Activated CD4-positive, alpha-beta T cell treated with anti-CD3 and anti-CD28 coated beads, Interleukin-2, amount 10 ng/mL, durations not matched to agents 7 days and 5 days (primary cell): ENCODE measurements at regions of chr15 and their contacts with region 1.

Region 1: DNA sequence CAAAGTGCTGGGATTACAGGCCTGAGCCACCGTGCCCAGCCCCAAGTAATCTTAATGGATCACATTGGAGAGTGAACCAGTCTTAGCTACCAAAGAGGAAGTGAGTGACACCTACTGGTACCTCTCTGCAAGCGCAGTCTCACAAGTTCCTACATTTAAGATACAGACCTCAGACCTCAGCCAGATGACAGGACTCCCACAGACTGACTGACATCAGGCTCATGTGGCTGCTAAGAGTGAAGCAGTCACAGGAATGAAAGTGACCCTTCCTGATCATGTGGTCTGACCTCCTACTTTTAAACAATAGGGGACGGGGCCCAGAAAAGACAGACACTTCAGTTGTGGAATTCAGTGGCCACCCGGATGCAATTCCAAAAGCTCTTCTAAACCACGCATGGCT is 36.3 kb upstream of the GNB5 start:
- DNase-seq: peak; percentile 78
- H3K4me3 Mint-ChIP-seq: no peak overlapping the region
- H3K27ac Mint-ChIP-seq: no peak overlapping the region
- H3K4me1 Mint-ChIP-seq: peaks cover 25% of the 10 kb centered on the region
- H3K27me3 Mint-ChIP-seq: no peaks in the 10 kb centered on the region

Region 2: DNA sequence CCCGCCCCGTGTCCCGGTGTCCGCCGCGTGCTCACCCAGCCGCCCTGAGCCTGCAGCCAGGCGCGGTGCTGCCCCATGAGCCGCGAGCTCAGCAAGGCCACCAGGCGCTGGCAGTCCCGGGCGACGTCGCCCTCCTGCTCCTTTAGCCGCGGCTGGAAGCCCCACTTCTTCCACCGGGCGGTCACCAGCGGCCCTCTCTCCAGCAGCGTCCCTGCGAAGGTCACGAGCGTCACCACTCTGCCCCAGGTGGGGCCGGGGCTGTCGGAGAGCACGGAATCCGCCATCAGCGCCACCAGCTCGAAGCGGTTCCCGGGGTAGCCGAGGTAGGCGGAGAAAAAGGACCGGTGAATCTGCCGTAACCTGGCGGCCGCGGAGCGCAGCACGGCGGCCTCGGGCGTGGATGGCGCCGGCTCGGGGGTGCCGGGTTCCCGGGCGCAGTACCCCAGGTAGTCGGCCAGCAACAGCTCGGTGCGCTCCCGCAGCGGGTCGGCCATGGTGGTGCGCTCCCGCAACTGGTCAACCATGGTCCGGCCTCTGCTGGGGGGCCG is 115.2 kb before region 1 on chr15:
- CTCF ChIA-PET with region 1: no interaction called
- POLR2A ChIA-PET with region 1: no interaction called
- DNase-seq: peak; percentile 49
- H3K4me3 Mint-ChIP-seq: peak overlapping the region; percentile 51
- H3K27ac Mint-ChIP-seq: no peak overlapping the region
- H3K4me1 Mint-ChIP-seq: peaks cover 11% of the 10 kb centered on the region
- H3K27me3 Mint-ChIP-seq: peaks cover 44% of the 10 kb centered on the region

Region 3: GRCh38 chr15:52124270-52124880 is 103.1 kb before region 1 on chr15:
- CTCF ChIA-PET with region 1: no interaction called
- POLR2A ChIA-PET with region 1: no interaction called
- DNase-seq: no peak
- H3K4me3 Mint-ChIP-seq: no peak overlapping the region
- H3K27ac Mint-ChIP-seq: no peak overlapping the region
- H3K4me1 Mint-ChIP-seq: no peaks in the 10 kb centered on the region
- H3K27me3 Mint-ChIP-seq: no peaks in the 10 kb centered on the region

Region 4: DNA sequence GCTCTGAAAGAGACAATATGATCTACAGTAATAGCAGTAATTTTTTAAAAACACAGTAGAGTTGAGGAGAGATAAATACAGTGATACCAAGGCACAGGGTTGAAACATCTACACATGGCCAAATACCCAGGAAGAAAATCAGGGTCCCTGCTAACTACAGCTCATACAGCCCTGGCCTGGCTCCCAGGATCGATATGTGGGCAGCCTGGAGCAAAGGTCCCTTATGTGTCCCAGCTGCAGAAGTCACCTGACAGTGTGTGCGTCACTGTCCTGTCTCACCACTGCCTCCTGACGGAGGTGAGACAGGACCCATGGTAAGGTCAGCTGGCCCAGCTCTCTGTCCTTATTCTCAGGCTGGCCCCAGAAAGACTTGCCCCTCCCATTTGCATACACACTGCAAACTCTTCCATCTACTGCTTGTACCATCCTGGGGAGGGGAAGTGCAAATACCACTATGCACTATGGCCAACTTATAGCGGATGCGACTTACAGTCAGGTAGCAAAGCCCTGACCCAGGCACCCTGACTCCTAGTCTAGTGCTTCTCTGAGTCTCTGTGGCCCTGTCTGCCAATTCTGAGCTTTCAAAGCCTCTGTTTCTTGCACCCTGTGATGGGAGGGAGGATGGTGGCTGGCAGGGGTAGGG is 92.8 kb before region 1 on chr15:
- CTCF ChIA-PET with region 1: no interaction called
- POLR2A ChIA-PET with region 1: no interaction called
- DNase-seq: no peak
- H3K4me3 Mint-ChIP-seq: no peak overlapping the region
- H3K27ac Mint-ChIP-seq: peak overlapping the region; percentile 11
- H3K4me1 Mint-ChIP-seq: peaks cover 14% of the 10 kb centered on the region
- H3K27me3 Mint-ChIP-seq: no peaks in the 10 kb centered on the region

Region 5: GRCh38 chr15:52183562-52184173 is 43.8 kb before region 1 on chr15:
- CTCF ChIA-PET with region 1: interaction called, 10 read pairs
- POLR2A ChIA-PET with region 1: no interaction called
- DNase-seq: peak; percentile 25
- H3K4me3 Mint-ChIP-seq: no peak overlapping the region
- H3K27ac Mint-ChIP-seq: no peak overlapping the region
- H3K4me1 Mint-ChIP-seq: peaks cover 18% of the 10 kb centered on the region
- H3K27me3 Mint-ChIP-seq: no peaks in the 10 kb centered on the region

Region 6: DNA sequence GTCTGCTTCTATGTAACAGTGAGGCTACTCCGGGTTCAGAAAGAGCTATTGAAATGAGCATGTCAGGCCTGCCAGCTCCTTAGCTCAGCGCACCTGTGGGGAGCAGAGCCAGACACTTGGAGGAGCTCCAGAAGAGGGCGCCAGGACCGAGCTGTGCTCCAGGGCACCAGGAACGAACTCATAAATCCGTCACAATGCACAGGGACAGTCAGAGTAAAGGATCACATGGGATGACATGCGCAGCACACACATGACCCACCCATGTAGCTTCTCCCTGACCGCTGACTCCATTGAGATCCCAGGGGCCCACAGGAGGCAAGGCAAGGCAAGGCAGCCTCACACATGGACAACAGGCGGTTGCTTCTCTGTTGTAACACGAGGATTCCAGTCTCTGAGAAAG is 10.3 kb before region 1 on chr15:
- CTCF ChIA-PET with region 1: interaction called, 23 read pairs
- POLR2A ChIA-PET with region 1: interaction called, 4 read pairs
- DNase-seq: peak; percentile 30
- H3K4me3 Mint-ChIP-seq: no peak overlapping the region
- H3K27ac Mint-ChIP-seq: no peak overlapping the region
- H3K4me1 Mint-ChIP-seq: peaks cover 19% of the 10 kb centered on the region
- H3K27me3 Mint-ChIP-seq: peaks cover 1% of the 10 kb centered on the region

Region 7: DNA sequence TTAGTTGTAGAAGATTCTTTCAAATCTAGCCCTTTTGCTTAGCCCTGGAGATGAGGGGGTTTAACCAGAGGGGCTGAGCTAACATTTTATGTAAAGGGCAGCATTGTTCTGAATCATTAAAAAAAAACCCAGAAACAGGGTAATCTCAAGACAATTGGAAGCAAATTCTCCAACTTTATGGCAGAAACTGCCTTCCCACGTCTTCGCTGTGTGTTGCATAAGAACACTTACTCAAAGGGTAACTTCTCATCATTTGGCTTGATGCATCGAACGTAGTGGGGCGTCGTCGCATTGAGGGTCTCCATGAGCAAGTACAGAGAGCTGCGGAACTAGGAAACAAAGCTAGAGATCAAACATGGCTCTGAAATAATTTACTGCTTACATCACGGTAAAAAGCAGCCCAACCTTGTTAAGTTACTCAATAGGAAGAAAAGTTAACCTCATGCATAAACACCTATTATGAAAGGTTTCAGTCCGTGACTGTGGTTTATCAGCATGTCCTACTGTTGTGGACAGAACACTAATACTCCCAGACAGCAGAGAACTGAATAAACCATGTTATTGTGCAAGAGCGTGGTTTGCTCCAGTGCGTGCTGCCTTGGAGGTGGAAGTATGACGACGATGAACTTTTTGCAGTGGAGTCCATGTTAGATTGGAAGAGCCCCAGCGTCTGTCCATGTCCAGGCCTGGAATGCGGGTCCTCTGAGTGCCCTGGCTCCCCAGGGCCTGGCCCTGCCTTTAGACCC is 19.4 kb after region 1 on chr15:
- CTCF ChIA-PET with region 1: interaction called, 10 read pairs
- POLR2A ChIA-PET with region 1: no interaction called
- DNase-seq: no peak
- H3K4me3 Mint-ChIP-seq: no peak overlapping the region
- H3K27ac Mint-ChIP-seq: no peak overlapping the region
- H3K4me1 Mint-ChIP-seq: peaks cover 1% of the 10 kb centered on the region
- H3K27me3 Mint-ChIP-seq: peaks cover 12% of the 10 kb centered on the region